ENCODE measurements at regions of chr1 and their contacts with region 1.

Region 1: DNA sequence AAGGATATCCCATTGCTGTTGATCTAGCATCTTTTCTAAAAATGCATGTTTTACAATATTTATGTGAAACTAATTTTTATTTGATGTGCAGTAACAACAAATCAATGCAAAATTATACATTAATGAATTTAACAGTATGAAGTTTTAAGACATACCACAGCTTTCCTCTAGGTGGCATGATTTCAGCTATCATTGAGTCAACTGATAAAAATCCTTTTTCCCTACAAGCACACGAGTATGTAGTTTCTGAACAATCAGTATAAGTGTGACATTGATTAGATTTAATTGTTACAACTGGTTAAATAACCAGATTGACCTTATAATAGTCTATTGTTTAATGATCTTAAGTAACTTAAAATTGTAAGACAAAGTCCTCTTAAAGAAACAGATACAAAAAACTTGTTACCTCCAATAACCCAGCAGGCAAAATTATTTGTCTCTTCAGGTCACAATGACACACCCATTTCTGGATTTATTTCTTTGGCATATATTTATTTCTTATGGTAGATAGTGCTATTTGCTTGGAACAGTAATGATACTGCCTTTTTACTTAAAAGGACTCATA is 5.8 kb upstream of the TGFB2 start:
- DNase-seq: no peak

Region 2: DNA sequence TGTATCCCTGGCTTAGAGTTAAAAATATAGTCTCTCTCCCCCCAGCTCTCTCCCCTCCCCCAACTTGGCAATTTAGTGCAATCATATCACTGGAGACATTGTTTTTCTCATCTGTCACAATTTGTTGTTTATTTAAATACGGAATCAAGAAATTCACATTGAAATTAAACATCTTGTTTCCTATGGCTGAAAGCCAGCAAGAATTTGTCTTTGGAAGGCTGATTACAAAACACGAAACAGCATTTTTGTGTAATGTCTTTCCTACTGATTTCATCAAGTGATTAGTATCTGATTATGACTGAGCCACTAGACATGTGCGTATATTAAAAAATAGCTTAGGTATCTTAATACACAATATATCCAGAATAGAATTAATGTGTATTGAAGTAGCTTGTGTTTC is 954.1 kb after region 1 on chr1:
- intact Hi-C with region 1: loop called in 1 of 2 experiments (anchors 5 kb)
- DNase-seq: no peak